ENCODE measurements at regions of chr11 and their contacts with region 1.

Region 1: DNA sequence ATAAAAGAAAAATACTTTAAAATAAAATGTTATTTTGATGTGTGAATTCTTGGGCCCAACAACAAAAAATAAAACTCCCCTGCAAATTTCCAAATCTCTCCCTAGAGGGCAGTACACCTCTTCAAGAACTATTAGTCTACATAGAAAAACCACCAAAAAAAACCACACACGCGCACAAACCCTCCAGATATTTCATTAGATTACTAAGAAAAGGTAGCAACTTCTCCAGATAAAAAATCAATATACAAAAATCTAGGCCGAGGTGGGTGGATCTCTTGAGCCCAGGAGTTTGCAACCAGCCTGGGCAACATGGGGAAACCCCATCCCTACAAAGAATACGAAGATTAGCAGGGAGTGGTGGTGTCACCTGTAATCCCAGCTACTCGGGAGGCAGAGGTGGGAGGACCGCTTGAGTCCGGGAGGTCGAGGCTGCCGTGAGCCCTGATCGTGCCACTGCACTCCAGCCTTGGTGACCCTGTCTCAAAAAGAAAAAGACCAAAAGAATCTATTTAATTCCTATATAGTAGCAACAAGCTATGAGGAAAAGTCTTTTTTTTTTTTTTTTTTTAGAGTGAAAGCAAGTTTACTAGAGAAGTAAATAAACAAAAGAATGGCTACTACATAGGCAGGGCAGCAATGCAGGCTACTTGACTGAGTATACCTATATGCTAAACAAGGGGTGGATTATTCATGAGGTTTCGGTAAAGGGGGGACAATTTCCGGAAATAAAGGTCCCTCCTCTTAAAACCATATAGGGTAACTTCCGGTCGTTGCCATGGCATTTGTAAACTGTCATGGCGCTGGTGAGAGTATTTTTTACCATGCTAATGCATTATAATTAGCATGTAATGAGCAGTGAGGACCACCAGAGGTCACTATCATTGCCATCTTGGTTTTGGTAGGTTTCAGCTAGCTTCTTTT is 13.1 kb downstream of the B3GNT6 start:
- DNase-seq: peak; percentile 97
- H3K4me3 ChIP-seq: peak overlapping the region; percentile 28 to 36 (median 31)
- H3K27ac ChIP-seq: no peak overlapping the region
- H3K4me1 ChIP-seq: peaks cover 5% of the 10 kb centered on the region
- H3K27me3 ChIP-seq: peaks cover 4 to 10% of the 10 kb centered on the region in 2 experiments
- CTCF ChIP-seq: peak; percentile 48 to 59
- POLR2A ChIP-seq: no peak

Region 2: DNA sequence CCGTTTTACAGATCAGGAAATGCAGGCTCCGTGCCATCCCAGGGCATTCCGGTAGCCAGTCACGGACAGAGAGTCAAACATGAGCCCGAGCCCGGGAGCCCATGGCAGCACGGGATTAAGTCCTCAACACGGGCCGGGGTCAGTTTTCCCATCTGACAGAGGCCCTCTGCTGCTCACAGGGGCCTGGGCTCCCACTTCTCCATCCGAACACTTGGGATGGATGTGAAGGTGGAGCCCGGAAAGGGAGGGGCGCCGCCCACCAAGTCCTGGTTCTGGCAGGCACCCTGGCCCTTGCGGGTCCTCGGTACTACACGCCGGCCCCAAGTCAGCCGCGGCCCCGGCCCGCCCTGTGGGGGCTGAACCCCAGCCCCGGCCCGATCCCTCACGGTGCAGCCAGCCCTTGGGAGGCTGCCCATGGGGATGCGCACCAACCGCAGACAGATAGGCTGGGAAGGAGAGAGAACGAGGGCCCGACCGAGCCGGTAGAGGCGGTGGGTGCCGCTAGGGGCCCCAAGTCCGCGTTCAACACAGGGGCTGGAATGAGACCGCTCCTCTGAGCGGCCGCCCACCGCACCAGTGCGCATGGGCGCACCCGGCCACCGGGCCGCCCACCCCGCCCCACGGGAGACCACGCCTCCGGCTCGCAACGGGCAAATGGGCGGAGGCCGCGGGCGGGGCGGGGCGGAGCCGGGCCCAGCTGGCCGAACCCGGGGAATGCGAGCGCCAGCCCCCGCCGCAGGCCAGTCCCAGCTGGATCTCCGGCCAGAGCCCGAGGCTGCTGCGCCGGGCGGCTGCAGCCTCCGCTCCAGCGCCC is 19.2 kb after region 1 on chr11 and contains the start of gene CAPN5:
- CTCF ChIA-PET with region 1: interaction called, 45 read pairs
- POLR2A ChIA-PET with region 1: interaction called, 5 read pairs
- dilution Hi-C with region 1: no loop called
- intact Hi-C with region 1: loop called (anchors 1 kb)
- DNase-seq: peak; percentile 95
- H3K4me3 ChIP-seq: peak within 1 kb of the TSS; percentile 48 to 75 (median 62)
- H3K27ac ChIP-seq: no peak within 1 kb of the TSS
- H3K4me1 ChIP-seq: peaks cover 11% of the 10 kb centered on the region
- H3K27me3 ChIP-seq: no peaks in the 10 kb centered on the region
- CTCF ChIP-seq: peak; percentile 44 to 58
- POLR2A ChIP-seq: peak; percentile 98
- total RNA-seq, gene CAPN5: 14.3 and 15.0 TPM in 2 replicates

Region 3: DNA sequence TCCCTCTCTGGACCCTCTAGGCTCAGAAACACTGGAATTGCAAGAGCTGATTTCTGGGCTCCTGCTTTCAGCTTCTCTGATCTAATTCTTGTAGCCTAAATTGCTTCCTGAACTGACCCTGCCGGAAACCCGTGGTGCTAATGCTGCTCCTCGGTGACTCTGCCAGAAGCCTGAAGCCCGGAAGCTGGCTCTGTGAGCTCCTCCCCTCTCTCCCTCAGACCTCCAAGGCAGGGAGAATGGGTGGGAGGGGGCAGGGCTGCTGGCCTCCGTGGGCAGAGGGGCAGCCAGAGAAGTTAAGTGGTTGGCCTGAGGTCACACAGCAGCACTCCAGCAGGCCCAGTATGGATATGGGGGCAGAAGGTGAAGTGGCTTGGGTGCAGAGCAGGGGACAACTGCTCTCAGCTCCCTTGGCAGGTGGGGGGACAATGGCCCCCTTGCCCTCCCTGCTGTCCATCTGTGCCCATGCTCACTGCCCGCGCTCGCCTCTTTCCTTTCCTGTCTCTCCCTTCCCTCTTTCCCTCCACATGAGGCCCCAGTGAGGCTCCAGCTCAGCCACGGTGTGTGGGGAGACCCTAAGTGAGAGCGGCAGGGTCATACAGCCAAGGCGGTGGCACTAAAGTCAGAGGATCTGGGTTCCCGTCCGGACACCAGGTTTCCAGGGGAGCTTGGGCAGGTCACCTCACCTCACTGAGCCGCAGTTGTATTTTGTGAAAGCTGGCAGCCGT is 35.7 kb after region 1 on chr11:
- CTCF ChIA-PET with region 1: interaction called, 316 read pairs
- POLR2A ChIA-PET with region 1: interaction called, 5 read pairs
- dilution Hi-C with region 1: no loop called
- intact Hi-C with region 1: no loop called
- DNase-seq: peak; percentile 64
- H3K4me3 ChIP-seq: peak overlapping the region in 1 of 3 experiments; percentile 5
- H3K27ac ChIP-seq: no peak overlapping the region
- H3K4me1 ChIP-seq: peaks cover 14% of the 10 kb centered on the region
- H3K27me3 ChIP-seq: no peaks in the 10 kb centered on the region
- CTCF ChIP-seq: no peak
- POLR2A ChIP-seq: no peak

Region 4: GRCh38 chr11:77101052-77101537 is 53.8 kb after region 1 on chr11:
- CTCF ChIA-PET with region 1: interaction called, 40 read pairs
- POLR2A ChIA-PET with region 1: interaction called, 4 read pairs
- dilution Hi-C with region 1: no loop called
- intact Hi-C with region 1: loop called (anchors 1 kb)
- DNase-seq: peak; percentile 30
- H3K4me3 ChIP-seq: no peak overlapping the region
- H3K27ac ChIP-seq: no peak overlapping the region
- H3K4me1 ChIP-seq: no peaks in the 10 kb centered on the region
- H3K27me3 ChIP-seq: no peaks in the 10 kb centered on the region
- CTCF ChIP-seq: peak; percentile 67 to 69
- POLR2A ChIP-seq: no peak

Region 5: GRCh38 chr11:77113382-77114088 is 66.3 kb after region 1 on chr11:
- CTCF ChIA-PET with region 1: interaction called, 64 read pairs
- POLR2A ChIA-PET with region 1: no interaction called
- dilution Hi-C with region 1: no loop called
- intact Hi-C with region 1: loop called (anchors 1 kb)
- DNase-seq: peak; percentile 26
- H3K4me3 ChIP-seq: no peak overlapping the region
- H3K27ac ChIP-seq: no peak overlapping the region
- H3K4me1 ChIP-seq: peaks cover 5% of the 10 kb centered on the region
- H3K27me3 ChIP-seq: no peaks in the 10 kb centered on the region
- CTCF ChIP-seq: peak; percentile 52 to 76
- POLR2A ChIP-seq: no peak

Measured in endothelial cell of umbilical vein (primary cell).